ENCODE measurements at regions of chrX and their contacts with region 1.

Region 1: GRCh38 chrX:13669246-13669737 is 16.4 kb downstream of the TCEANC start:
- DNase-seq: no peak

Region 2: DNA sequence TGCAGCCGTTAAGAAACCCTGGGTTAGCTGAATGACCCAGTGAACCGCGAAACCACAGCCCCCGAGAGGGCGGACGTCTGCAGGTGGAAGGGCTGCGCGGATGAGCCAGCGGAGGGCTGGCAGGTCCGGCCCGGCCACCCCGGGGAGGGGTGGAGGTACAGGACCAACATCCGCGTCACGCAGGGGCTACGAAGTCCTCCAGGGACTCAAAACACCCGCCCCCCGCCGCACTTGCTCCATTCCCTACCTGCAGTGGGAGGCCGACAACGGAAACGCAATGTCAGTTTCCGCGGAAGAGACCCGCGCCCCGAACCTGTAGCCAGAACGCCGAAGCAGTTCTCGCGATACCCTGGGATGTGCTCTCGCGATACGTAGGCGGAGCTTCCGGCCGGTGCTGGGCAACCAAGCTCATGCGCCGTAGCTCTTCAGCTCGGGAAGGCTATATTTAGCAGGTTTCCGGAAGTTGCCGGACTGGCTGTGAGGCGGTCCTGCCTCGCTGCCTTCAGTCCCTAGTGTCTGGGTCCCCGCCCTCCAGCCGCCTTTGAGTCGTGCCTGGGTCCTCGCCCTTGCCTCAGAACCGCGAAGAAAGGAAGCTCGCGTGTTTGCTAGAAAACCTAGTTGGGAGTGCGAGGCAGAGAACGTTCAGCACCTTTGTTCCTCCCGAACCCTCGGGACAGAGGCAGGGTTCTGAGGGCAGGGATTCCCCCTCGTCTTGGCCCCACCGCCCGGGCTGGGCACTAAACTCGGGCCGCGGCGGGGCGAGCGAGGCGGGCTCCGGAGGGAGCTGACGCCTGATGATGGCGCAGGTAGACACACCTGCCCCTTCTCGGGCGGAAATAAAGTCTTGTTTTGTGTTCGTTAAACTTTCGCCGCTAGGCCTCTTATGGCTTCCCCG is 65.2 kb after region 1 on chrX and contains the starts of genes OFD1 and TRAPPC2:
- intact Hi-C with region 1: loop called (anchors 5 kb)
- DNase-seq: peak; percentile 96
- total RNA-seq, gene OFD1: 12.8 TPM
- total RNA-seq, gene TRAPPC2: 9.9 TPM

Measured in cardiac septum (tissue), 1 donor.